GM10248 (cell line): ENCODE measurements at regions of chr19 and their contacts with region 1.

Region 1: GRCh38 chr19:48842789-48843162 is 6.5 kb upstream of the HSD17B14 start:
- DNase-seq: peak; percentile 69
- CTCF ChIP-seq: peak; percentile 79

Region 2: GRCh38 chr19:48646001-48646721 is 196.6 kb before region 1 on chr19 and contains the start of gene CA11:
- CTCF ChIA-PET with region 1: interaction called, 20 read pairs
- POLR2A ChIA-PET with region 1: no interaction called
- DNase-seq: peak; percentile 93
- CTCF ChIP-seq: peak; percentile 98

Region 3: DNA sequence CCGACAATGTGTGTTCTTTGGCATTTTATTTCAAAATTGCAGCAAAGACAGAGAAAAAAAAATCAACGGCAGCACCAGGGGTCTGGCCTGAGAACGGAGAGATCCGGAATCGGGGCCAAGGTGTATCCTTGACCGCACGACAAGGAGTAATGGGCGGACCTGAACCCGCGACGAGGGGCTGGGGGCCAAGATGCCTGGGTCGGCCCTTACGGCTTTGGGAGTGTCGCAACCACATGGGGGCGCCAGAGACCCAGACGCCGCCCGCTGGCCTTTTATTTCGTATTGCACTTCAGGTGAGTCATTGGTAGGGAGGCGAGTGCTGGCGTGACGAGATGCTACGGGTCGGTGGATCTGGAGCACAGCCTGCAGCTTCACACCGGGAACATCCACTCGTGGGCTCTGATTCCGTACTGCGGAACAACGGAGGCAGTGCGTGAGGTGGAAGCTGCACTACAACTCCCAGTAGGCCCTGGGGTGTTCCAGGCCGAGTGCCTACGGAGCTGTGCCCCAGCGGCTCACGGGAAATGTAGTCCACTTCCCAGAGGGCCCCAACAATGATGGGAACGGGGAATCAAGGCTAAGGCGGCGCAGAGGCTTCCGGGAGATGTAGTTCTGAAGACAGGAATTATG is 47.6 kb before region 1 on chr19:
- CTCF ChIA-PET with region 1: interaction called, 291 read pairs
- POLR2A ChIA-PET with region 1: no interaction called
- DNase-seq: peak; percentile 92
- CTCF ChIP-seq: peak; percentile 85

Region 4: GRCh38 chr19:48812094-48812929 is 30.5 kb before region 1 on chr19:
- CTCF ChIA-PET with region 1: interaction called, 26 read pairs
- POLR2A ChIA-PET with region 1: no interaction called
- DNase-seq: peak; percentile 95
- CTCF ChIP-seq: no peak

Region 5: DNA sequence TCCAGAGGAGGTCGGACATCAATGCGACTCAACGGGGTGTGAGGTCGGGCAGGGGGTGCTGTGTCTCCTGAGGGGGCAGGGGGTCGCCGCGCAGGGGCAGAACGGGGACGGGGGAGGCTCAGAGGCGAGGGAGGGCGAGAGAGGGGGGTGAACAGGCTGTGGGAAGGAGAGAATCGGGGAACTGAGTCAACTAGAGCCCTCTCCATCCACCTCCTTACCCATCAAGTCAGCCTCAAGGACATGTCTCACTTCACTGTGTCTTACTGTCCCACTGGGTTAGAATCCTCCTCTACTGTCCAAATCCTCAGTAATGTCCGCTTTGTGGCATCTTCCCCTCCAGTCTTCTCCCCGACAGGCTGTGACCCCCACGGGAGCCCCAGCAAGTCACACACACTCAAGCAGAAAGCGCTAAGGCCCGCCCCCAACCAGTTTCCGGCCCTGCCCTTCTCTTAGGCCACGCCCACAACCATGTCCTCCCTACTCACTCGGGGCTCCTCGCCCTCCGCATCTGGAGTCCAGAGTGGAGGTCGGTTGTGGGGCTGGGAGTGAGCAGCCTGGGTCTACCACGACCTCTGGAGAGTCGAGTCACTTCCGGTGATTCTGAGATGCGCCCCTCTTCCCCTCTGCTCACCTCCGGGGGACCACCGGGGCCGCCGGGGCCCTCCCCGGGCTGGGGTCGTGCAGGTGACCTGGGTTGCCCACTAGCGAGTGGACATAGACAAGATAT is 16.4 kb after region 1 on chr19:
- CTCF ChIA-PET with region 1: interaction called, 66 read pairs
- POLR2A ChIA-PET with region 1: interaction called, 6 read pairs
- DNase-seq: peak; percentile 85
- CTCF ChIP-seq: no peak

Region 6: GRCh38 chr19:48970923-48971395 is 128.2 kb after region 1 on chr19:
- CTCF ChIA-PET with region 1: interaction called, 31 read pairs
- POLR2A ChIA-PET with region 1: interaction called, 4 read pairs
- DNase-seq: peak; percentile 77
- CTCF ChIP-seq: peak; percentile 93